Left lung (tissue), 14 donors: ENCODE measurements at regions of chr3 and their contacts with region 1.

Region 1: DNA sequence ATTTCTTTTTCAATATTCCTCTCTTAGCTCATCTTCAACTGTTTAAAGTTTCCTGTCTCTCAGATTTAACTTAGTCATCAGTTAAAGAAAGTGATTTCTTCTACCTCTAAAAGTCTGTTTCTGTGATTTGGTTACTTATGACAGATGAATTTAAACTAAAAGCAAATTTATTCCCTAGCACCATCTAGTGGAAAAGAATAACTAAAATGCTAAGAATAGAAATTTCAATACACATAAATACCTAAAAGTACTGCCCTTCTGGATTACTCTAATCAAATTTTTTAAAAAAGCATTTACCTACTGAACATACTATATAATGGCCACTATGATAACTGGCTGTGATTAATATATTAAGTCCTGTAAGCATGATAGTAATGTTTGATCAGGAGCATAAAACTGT is 14.0 kb upstream of the ZCWPW2 start:
- DNase-seq: no peak
- ATAC-seq: no peak
- H3K4me3 ChIP-seq: no peak overlapping the region
- H3K27ac ChIP-seq: no peak overlapping the region
- H3K4me1 ChIP-seq: no peaks in the 10 kb centered on the region
- H3K27me3 ChIP-seq: no peaks in the 10 kb centered on the region
- CTCF ChIP-seq: no peak

Region 2: DNA sequence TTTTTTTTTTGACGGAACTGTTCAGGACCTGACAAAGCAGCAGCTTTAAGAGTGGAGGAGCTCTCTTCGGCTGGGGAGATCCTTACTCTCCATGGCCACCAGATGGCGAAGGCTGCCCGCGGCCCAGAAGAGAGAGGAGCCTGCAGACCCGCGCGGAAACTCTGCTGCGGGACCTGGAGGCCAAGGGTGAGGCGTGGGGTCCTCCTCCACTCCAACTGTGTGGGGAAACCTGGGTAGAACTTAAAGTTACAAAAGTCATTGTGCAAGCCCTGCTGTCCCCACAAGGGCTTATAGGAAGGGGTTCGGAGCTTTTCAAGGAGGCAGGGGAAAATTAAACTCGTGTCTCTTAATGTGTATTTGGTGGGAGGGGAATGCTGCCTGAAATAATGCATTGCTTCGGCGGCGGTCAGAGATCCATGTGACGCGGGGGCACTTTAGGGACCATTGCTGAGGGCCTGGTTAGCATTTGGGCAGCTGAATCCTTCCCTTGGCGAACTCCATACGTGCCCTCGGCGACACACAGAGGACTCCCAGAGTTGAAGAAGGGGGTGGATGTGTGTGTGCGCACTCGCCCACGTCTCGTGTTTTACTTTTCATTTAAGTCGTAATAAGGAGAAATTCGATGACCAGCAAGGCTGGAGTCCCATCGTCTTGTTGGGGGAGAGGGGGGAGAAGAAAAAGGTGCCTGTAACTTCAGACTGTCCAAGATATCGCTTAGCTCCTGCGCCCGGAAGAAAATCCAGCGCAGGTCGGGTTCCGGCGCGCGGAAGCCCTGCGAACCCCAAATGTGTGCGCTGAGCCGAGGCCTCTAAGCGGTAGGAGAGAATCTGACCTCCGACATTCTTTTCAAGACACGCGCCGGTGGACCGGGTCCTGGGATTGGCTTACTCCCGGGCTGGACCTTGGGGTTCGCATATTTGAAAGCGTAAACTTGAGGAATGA is 622.1 kb before region 1 on chr3:
- intact Hi-C with region 1: loop called in 1 of 2 experiments (anchors 10 kb)
- DNase-seq: peak in 3 of 4 donors; percentile 78 to 91 (median 82)
- ATAC-seq: peak; percentile 96
- H3K4me3 ChIP-seq: peak overlapping the region; percentile 32 to 48
- H3K27ac ChIP-seq: no peak overlapping the region
- H3K4me1 ChIP-seq: peaks cover 16 to 33% of the 10 kb centered on the region in 2 donors
- H3K27me3 ChIP-seq: peaks cover 42 to 82% of the 10 kb centered on the region in 2 donors
- CTCF ChIP-seq: peak; percentile 73 to 77

Region 3: DNA sequence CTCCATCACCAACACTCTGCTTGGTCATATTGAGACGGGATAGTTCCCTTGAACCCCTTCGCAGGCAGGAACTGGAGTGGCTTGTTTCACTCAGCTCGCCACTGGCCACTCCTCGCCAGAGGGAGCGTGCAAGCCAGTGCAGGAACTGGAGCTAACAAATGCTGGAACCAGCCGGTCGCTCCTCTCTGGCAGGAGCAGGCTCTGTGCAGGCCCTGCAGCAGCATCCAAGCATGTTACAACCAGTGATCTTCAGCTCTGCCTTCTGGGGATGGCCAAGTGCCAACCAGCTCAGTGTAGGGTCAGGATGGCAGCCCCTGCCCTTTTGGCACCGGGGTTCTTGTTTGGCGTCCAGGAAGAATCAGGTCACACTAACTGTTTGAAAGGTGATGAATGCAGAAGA is 343.0 kb after region 1 on chr3:
- intact Hi-C with region 1: no loop called
- DNase-seq: peak in 1 of 4 donors; percentile 65
- ATAC-seq: peak; percentile 32
- H3K4me3 ChIP-seq: no peak overlapping the region
- H3K27ac ChIP-seq: no peak overlapping the region
- H3K4me1 ChIP-seq: no peaks in the 10 kb centered on the region
- H3K27me3 ChIP-seq: no peaks in the 10 kb centered on the region
- CTCF ChIP-seq: no peak